HCT116 (cell line): ENCODE measurements at regions of chr17 and their contacts with region 1.

Region 1: DNA sequence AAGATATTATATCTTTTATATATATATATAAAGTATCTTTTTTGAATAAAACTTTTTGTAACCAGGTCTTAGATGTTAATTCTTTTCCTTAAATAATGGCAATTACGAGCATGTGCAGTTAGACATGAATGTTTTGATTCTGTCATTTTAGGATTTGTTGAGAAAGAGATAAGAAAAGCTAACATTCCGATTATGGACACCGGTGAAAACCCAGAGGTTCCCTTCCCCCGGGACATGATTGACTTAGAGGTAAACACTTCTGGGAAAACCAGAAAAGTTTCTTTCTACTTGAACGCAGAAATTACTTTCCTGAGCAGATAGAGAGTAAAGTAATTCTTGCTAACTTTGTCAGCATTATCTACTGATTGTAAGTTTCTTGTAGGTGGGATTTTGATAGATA is 9.2 kb downstream of the ATP6V0A1 start:
- DNase-seq: no peak
- ATAC-seq: no peak
- H3K4me3 ChIP-seq: no peak overlapping the region
- H3K27ac ChIP-seq: no peak overlapping the region
- H3K4me1 ChIP-seq: peaks cover 0 to 8% of the 10 kb centered on the region in 2 experiments; a peak in 2 of 4 replicates
- H3K27me3 ChIP-seq: no peaks in the 10 kb centered on the region
- CTCF ChIP-seq: no peak
- POLR2A ChIP-seq: no peak
- RAD21 ChIP-seq: no peak

Region 2: DNA sequence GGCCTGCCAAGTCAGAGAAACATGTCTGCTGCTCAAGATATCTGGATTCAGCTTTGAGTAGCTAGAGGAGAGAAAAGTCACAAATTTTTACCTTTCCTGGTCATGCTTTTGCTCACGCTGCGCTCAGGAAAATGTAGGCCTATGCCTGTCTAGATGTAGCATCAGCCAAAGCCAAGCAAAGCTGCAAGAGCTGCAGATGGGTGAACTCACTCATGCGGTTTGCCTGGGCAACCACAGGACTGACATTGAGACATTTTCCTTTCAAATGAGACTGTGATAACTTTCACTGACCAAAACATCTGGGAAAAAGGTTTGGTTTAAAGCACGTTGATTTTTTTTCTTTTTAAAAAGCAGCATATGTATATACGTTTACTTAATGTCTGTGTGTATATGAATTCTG is 34.2 kb after region 1 on chr17:
- CTCF ChIA-PET with region 1: no interaction called
- POLR2A ChIA-PET with region 1: no interaction called
- RAD21 ChIA-PET with region 1: no interaction called
- intact Hi-C with region 1: loop called (anchors 5 kb)
- DNase-seq: no peak
- ATAC-seq: no peak
- H3K4me3 ChIP-seq: no peak overlapping the region
- H3K27ac ChIP-seq: no peak overlapping the region
- H3K4me1 ChIP-seq: peaks cover 0 to 6% of the 10 kb centered on the region in 2 experiments; a peak in 1 of 4 replicates
- H3K27me3 ChIP-seq: no peaks in the 10 kb centered on the region
- CTCF ChIP-seq: no peak
- POLR2A ChIP-seq: no peak
- RAD21 ChIP-seq: no peak

Region 3: GRCh38 chr17:42598905-42599304 is 131.0 kb after region 1 on chr17:
- CTCF ChIA-PET with region 1: no interaction called
- POLR2A ChIA-PET with region 1: no interaction called
- RAD21 ChIA-PET with region 1: no interaction called
- intact Hi-C with region 1: no loop called
- DNase-seq: no peak
- ATAC-seq: no peak
- H3K4me3 ChIP-seq: no peak overlapping the region
- H3K27ac ChIP-seq: no peak overlapping the region
- H3K4me1 ChIP-seq: no peaks in the 10 kb centered on the region
- H3K27me3 ChIP-seq: no peaks in the 10 kb centered on the region
- CTCF ChIP-seq: no peak
- POLR2A ChIP-seq: no peak
- RAD21 ChIP-seq: no peak